ENCODE measurements at regions of chr5 and their contacts with region 1.

Region 1: GRCh38 chr5:163880302-163880701 is 374.9 kb downstream of the MAT2B start:
- DNase-seq: no peak
- H3K4me3 ChIP-seq: no peak overlapping the region
- H3K27ac ChIP-seq: no peak overlapping the region
- H3K4me1 ChIP-seq: no peaks in the 10 kb centered on the region
- H3K27me3 ChIP-seq: no peaks in the 10 kb centered on the region
- CTCF ChIP-seq: no peak

Region 2: GRCh38 chr5:163661360-163661759 is 218.9 kb before region 1 on chr5:
- intact Hi-C with region 1: loop called (anchors 5 kb)
- DNase-seq: no peak
- H3K4me3 ChIP-seq: no peak overlapping the region
- H3K27ac ChIP-seq: no peak overlapping the region
- H3K4me1 ChIP-seq: no peaks in the 10 kb centered on the region
- H3K27me3 ChIP-seq: no peaks in the 10 kb centered on the region
- CTCF ChIP-seq: no peak

Measured in left ventricle myocardium inferior (tissue), 1 donor.